HEK293T (cell line): ENCODE measurements at regions of chr17 and their contacts with region 1.

Region 1: GRCh38 chr17:63611354-63611753 is 10.7 kb downstream of the TACO1 start:
- DNase-seq: no peak

Region 2: GRCh38 chr17:63425482-63425881 is 185.9 kb before region 1 on chr17:
- CTCF ChIA-PET with region 1: interaction called, 25 read pairs
- POLR2A ChIA-PET with region 1: interaction called, 3 read pairs
- DNase-seq: peak; percentile 86

Region 3: DNA sequence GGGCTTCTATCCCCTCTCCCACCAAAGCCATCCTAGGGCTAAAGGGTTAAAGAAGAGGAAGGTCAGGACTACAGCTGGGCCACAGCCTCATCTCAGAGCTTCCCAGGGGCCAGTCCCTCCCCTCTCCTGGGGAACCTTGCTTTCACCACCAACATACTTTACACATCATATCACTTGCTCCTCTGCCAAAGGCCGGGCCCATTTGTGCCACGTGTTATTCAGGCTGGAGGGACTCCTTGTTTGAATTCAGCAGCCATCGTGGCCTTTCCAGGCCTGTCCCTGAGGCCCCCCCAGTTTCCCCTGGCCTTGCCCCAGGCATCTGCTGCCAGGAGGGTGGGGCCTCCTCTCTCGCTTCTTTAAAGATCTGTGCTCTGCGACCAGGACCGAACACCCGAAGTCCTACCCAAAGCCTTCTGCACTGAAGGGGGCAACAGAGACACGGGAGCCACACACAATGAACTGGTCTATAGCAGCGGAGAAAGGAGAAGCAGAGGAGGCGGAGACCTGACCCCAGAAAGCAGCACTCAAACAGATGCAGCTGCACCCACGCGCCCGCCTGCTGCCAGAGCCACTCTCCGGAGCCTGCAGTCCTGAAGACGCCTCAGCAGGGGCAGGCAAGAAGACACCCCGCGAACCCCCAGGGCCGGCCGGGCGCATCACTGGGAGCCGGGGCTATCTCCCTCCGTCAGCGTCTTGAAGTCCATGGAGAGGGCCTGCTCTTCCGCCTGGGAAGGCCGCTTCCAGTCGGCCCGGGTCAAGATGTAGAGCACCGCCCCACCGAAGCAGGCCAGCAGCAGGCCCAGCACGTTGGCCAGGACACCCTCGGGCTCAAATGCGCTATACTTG is 177.4 kb before region 1 on chr17:
- CTCF ChIA-PET with region 1: interaction called, 16 read pairs
- POLR2A ChIA-PET with region 1: interaction called, 3 read pairs
- DNase-seq: no peak

Region 4: DNA sequence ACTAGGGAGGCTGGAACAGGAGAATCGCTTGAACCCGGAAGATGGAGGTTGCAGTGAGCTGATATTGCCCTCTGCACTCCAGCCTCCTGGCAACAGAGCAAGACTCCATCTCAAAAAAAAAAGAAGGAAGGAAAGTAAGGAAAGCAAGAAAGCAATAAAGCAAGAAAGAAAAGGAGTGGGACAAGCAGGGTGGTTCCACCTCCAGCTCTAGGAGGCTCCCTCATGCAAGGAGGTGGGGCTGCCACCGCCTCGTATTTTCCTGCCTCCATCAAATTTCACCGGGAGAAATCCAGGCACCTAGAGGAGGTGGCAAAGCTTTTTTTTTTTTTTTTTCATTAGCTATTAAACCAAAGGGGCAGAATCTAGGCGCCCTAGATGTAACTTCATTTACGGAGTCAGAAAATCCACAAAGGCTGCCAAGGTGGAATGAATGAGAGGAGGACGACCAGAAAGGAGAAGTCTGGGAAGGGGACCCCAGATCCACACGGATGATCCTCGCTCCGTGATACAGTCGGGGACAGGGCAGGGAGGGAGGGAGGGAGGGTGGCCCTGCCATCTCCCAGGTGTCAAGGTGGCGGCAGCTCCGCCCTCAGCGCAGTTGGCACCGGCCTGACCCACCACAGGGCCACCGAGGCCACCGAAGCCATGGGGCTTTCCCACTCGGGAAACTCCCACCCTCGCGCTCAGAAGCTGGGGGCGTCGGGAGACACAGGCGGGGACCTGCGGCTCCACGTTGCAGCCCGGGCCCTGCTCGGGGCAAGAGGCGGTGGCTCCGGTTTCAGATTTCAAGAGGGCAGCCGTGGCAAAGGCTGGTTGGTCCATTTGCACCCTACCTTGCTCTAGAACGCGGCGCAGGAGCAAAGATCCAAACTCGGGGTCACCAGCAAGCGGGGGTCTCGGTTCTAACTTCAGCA is 166.0 kb before region 1 on chr17:
- CTCF ChIA-PET with region 1: interaction called, 10 read pairs
- POLR2A ChIA-PET with region 1: no interaction called
- DNase-seq: no peak

Region 5: DNA sequence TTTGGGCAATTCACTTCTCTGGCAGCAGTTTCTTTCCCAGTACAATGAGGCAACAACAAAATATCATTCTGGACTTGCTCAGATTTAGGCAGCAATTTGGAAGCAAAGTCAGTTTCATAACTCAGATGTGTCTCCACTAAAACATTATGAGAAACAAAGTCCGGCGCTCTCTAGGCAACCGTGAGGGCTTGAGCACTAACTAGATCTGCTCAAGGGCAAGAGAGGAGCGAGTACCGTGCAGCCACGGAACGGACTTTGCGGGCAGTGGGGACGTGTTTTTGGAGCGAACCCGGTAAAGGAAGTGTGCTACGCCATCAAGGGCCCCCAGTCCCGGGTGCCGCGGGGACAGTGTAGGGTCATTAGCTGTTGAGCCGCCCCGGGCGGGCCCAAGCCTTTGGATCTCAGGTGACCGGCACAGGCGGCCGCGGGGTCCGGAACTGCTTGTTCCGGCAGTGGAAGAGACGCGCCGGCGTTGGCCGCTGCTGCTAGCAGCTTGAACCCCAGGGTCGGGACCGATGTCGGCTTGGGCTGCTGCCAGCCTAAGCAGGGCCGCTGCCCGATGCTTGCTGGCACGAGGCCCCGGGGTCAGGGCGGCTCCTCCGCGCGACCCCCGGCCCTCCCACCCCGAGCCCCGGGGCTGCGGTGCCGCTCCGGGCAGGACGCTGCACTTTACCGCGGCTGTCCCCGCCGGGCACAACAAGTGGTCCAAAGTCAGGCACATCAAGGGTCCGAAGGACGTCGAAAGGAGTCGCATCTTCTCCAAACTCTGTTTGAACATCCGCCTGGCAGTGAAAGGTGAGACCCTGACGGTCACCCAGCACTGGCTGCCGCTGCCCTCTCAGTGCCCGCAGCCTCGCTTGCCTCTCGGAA is 10.6 kb before region 1 on chr17 and contains the start of gene TACO1:
- CTCF ChIA-PET with region 1: interaction called, 22 read pairs
- POLR2A ChIA-PET with region 1: interaction called, 10 read pairs
- DNase-seq: peak; percentile 90

Region 6: GRCh38 chr17:63621766-63622519 is 10.6 kb after region 1 on chr17 and contains the start of gene MAP3K3:
- CTCF ChIA-PET with region 1: interaction called, 18 read pairs
- POLR2A ChIA-PET with region 1: interaction called, 19 read pairs
- DNase-seq: peak; percentile 99

Region 7: DNA sequence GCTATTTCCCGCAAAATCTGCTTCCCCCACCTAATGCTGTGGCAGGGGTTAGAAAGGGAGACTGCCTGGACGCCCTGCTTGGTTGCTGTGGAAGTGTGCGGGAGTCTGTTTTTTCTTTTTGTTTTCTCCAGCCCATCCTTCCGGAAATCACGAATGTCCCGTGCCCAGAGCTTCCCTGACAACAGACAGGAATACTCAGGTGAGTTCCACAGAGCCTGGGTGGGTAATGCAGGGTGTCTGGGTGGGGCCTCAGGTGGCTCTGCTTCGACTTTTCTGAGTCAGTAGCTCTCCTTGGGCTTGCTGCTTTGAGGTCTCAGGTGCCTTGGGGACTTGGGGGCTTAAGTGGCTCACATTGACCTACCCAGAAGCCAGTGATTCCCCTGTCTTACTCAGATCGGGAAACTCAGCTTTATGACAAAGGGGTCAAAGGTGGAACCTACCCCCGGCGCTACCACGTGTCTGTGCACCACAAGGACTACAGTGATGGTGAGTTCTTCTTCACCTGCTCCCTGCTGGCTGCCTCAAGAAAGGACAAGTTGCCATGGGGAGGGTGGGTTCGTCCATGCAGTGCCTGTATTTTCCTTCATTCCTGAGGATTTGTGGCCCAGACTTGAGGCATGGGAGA is 77.2 kb after region 1 on chr17:
- CTCF ChIA-PET with region 1: no interaction called
- POLR2A ChIA-PET with region 1: no interaction called
- DNase-seq: no peak